ENCODE measurements at regions of chr9 and their contacts with region 1.

Region 1: DNA sequence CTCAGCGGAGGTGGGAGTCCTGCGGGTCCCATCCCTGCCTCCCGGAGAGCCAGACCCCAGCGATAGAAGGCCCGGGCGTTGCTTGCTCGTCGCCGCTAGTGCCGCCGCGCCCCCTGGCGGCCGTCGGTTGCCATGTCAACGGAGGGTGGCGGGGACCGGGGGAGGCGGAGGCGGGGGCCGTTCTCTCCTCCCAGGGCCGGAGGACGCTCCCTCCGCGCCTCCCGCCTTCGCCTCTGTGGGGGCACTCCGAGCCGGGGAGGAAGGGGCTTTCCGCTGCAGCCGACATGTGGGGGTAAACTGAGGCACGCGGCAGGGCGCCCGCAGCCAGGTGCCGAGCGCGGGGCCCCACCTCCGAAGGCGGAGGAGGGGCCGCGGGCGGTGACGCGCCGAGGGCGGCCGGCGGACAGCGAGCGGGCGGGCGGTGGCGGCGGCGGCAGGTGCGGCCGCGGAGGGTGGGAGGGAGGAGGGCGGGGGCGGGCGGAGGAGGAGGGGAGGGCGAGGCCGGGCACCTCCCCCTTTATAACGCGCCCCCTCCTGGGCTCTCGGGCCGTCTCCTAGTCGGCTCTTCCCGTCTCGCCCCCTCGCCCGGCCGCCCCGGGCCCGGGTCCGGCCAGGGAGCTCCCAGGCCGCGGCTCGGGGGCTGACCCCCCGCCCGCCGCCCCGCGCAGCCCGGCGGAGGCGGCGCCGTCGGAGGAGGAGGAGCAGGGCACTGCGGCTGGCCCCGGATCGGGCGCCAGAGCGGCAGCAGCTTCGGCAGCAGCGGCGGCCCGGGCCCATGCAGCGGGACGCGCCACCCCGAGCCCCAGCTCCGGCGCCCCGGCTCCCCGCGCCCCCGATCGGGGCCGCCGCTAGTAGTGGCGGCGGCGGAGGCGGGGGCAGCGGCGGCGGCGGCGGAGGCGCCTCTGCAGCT is 556 bp upstream of the CDK9 start:
- DNase-seq: peak; percentile 89 to 93 (median 90)
- H3K4me3 ChIP-seq: peak overlapping the region in 1 of 2 donors; percentile 61
- H3K4me3 Mint-ChIP-seq: peak overlapping the region; percentile 80 to 93 (median 86)
- H3K27ac ChIP-seq: peak overlapping the region; percentile 86
- H3K27ac Mint-ChIP-seq: peak overlapping the region; percentile 93 to 99 (median 97)
- H3K4me1 ChIP-seq: peaks cover 68% of the 10 kb centered on the region
- H3K4me1 Mint-ChIP-seq: peaks cover 34 to 74% (median 49%) of the 10 kb centered on the region in 4 donors
- H3K27me3 ChIP-seq: no peaks in the 10 kb centered on the region
- H3K27me3 Mint-ChIP-seq: no peaks in the 10 kb centered on the region

Region 2: DNA sequence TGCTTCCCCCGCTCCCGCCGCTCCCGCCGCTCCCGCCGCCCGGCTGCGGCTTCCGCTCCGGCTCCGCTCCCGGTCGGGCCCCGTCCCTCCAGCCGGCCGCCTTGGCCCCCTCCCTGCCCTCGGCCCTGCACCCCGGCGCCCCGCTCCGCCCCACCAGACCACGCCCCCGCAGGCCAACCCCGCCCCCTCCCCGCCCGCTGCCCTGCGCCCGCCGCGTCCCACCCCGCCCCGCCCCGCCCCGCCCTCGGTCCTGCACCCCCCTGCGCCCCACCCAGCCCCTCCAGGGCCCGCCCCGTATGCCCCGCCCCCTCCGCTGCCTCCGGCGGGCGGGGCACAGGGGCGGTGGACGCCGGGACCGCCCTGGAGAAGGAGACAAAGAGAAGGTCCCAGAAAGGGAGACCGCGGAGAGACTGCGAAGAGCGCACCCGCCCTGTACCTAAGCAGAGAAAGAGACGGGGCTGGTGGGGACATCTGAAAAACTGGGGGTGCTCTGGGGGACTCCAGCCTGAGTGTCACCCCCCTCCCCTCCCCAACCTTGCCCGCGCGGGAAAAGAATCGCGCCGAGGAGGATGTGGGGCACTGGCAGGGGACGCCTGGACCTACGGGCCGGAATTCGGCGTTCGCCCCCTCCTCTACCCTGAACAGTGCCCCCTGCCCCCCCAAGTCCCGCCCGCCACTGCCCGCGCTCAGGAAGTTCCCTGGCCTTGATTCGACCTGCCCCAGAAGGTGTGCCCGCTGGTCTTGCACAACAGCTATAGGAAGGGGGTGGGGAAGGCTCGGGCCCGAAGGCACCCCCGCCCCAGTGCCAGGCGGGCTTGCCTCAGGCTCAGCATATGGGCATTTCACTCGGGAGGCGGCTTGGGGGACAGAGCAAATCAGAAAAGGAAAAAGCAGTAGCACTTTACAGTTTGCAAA is 216.1 kb before region 1 on chr9:
- CTCF ChIA-PET with region 1: no interaction called
- POLR2A ChIA-PET with region 1: interaction called, 4 read pairs
- intact Hi-C with region 1: loop called (anchors 5 kb)
- DNase-seq: peak; percentile 72 to 78 (median 75)
- H3K4me3 ChIP-seq: peak overlapping the region; percentile 29 to 62
- H3K4me3 Mint-ChIP-seq: peak overlapping the region; percentile 79 to 94 (median 89)
- H3K27ac ChIP-seq: peak overlapping the region; percentile 56
- H3K27ac Mint-ChIP-seq: peak overlapping the region; percentile 82 to 97 (median 94)
- H3K4me1 ChIP-seq: peaks cover 36% of the 10 kb centered on the region
- H3K4me1 Mint-ChIP-seq: peaks cover 17 to 27% (median 21%) of the 10 kb centered on the region in 4 donors
- H3K27me3 ChIP-seq: no peaks in the 10 kb centered on the region
- H3K27me3 Mint-ChIP-seq: no peaks in the 10 kb centered on the region

Region 3: GRCh38 chr9:127686461-127687393 is 98.6 kb before region 1 on chr9:
- CTCF ChIA-PET with region 1: no interaction called
- POLR2A ChIA-PET with region 1: no interaction called
- intact Hi-C with region 1: no loop called
- DNase-seq: no peak
- H3K4me3 ChIP-seq: no peak overlapping the region
- H3K4me3 Mint-ChIP-seq: no peak overlapping the region
- H3K27ac ChIP-seq: no peak overlapping the region
- H3K27ac Mint-ChIP-seq: no peak overlapping the region
- H3K4me1 ChIP-seq: no peaks in the 10 kb centered on the region
- H3K4me1 Mint-ChIP-seq: no peaks in the 10 kb centered on the region
- H3K27me3 ChIP-seq: no peaks in the 10 kb centered on the region
- H3K27me3 Mint-ChIP-seq: no peaks in the 10 kb centered on the region

Region 4: DNA sequence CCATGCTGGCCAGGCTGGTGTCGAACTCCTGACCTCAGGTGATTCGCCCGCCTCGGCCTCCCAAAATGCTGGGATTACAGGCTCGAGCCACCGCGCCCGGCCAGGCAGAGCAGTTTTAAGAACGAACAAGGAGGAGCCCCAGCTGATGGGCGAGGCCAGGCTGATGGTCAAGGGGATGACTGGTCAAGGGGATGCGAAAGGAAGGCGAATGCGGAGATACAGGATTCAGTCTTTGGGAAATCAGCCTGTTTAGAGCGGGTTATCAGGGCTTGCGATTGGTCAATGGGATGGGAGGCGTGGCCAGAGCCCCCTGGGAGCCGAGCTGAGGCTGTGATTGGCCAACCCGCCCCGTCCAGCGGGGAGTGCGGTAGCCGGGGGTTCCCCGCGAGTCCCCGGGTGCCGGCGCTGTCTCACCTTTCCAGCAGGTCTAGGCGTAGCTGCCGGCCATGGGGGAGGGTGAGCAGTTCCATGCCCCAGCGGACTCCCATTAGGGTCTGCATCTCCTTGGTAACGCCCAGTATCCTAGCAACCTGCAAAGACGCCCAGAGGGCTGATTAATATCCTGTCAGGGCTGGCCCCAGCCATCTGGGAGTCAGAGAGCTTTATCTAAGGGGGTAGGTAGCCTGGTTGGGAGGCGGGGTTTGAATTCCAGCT is 42.7 kb before region 1 on chr9:
- CTCF ChIA-PET with region 1: interaction called, 14 read pairs
- POLR2A ChIA-PET with region 1: interaction called, 14 read pairs
- intact Hi-C with region 1: no loop called
- DNase-seq: no peak
- H3K4me3 ChIP-seq: no peak overlapping the region
- H3K4me3 Mint-ChIP-seq: no peak overlapping the region
- H3K27ac ChIP-seq: no peak overlapping the region
- H3K27ac Mint-ChIP-seq: peak overlapping the region in 2 of 7 donors; percentile 29 to 42
- H3K4me1 ChIP-seq: no peaks in the 10 kb centered on the region
- H3K4me1 Mint-ChIP-seq: peaks cover 0 to 7% (median 4%) of the 10 kb centered on the region in 4 donors
- H3K27me3 ChIP-seq: no peaks in the 10 kb centered on the region
- H3K27me3 Mint-ChIP-seq: no peaks in the 10 kb centered on the region

Region 5: DNA sequence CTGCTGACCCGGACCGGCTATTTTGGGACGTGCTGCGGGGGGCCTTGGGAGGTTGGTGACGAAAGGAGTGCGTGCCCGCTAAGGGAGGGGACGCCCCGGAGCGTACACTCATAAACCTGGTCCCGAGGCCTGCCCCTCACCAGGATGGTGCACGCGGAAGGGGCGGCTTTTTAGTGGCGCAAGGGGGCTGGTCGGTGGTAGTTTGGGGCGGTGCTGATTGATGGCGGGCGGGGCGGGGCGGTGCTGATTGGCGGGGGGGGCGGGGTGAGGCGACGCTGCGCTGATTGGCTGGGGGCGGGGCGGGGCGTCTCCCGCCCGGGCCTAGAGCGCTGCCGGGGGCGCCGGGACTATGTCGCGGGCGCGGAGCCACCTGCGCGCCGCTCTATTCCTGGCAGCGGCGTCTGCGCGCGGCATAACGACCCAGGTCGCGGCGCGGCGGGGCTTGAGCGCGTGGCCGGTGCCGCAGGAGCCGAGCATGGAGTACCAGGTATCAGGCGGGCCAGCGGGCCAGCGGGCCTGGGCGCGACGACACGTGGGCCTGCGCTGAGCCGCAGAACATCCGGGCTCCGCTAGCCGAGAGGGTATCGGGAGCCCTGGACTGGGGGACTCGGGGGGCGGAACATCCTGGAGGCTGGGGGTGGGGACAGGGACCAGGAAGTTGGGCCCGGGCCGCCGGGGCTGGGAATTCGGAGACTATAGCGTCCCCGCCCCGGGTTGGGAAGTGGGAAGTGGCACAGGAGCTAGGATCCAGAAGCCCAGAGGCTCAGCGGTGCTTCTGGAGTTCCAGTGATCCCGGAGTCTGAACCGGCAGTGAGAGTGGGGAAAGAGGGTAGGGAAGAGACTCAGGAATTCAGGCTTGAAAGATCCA is 17.5 kb after region 1 on chr9 and contains the start of gene FPGS:
- CTCF ChIA-PET with region 1: interaction called, 10 read pairs
- POLR2A ChIA-PET with region 1: interaction called, 54 read pairs
- intact Hi-C with region 1: loop called (anchors 1 kb)
- DNase-seq: peak; percentile 84 to 88 (median 87)
- H3K4me3 ChIP-seq: peak within 1 kb of the TSS; percentile 80 to 94
- H3K4me3 Mint-ChIP-seq: peak within 1 kb of the TSS; percentile 89 to 94 (median 92)
- H3K27ac ChIP-seq: peak within 1 kb of the TSS; percentile 72
- H3K27ac Mint-ChIP-seq: peak within 1 kb of the TSS; percentile 88 to 96 (median 93)
- H3K4me1 ChIP-seq: peaks cover 25% of the 10 kb centered on the region
- H3K4me1 Mint-ChIP-seq: peaks cover 4 to 38% (median 23%) of the 10 kb centered on the region in 4 donors
- H3K27me3 ChIP-seq: no peaks in the 10 kb centered on the region
- H3K27me3 Mint-ChIP-seq: no peaks in the 10 kb centered on the region
- total RNA-seq, gene FPGS: 100 to 101 TPM

Region 6: DNA sequence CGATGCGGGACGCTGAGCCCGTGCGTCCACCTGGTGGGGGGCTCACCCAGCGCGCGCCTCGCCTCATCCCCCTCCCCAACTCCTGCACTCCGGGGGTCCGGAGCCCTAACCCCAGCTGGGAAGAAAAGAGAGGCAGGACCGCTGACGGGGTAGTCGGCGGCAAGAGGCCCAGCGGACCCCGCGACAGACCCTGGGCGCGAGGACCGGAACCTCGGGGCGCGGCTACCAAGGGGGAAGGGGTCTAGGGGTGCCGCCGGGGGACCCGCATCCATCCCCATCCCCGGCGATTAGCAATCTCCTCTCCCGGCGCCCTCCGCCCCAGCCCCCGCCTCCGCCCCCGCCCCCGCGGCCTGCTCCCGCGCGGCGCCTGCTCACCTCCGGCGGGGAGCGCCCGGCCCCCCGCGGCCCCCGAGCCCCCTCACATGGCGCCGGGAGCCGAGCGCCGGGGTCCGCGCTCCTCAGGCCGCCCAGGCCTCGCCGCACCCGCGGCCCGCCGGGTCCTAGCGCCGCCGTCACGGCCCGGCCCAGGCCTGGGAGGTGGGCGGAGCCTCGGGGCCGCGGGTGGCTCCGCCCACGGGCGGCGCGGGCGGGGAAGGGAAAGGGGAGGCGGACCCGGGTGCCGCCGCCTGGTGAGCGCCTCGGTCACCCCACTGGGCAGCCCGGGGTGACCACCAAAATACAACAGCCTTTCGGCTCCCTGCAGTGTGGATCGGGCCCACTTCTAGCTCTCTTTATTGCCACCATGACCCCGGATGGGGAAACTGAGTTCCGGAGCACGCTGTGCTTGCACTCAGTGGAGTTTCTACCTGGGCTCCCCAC is 114.1 kb after region 1 on chr9 and contains the start of gene ST6GALNAC6:
- CTCF ChIA-PET with region 1: no interaction called
- POLR2A ChIA-PET with region 1: interaction called, 34 read pairs
- intact Hi-C with region 1: loop called (anchors 2 kb)
- DNase-seq: peak; percentile 61 to 74 (median 63)
- H3K4me3 ChIP-seq: peak within 1 kb of the TSS; percentile 68 to 79
- H3K4me3 Mint-ChIP-seq: peak within 1 kb of the TSS; percentile 87 to 92 (median 90)
- H3K27ac ChIP-seq: peak within 1 kb of the TSS; percentile 60
- H3K27ac Mint-ChIP-seq: peak within 1 kb of the TSS; percentile 47 to 91 (median 88)
- H3K4me1 ChIP-seq: peaks cover 58% of the 10 kb centered on the region
- H3K4me1 Mint-ChIP-seq: peaks cover 12 to 59% (median 37%) of the 10 kb centered on the region in 4 donors
- H3K27me3 ChIP-seq: no peaks in the 10 kb centered on the region
- H3K27me3 Mint-ChIP-seq: no peaks in the 10 kb centered on the region
- total RNA-seq, gene ST6GALNAC6: 125 to 127 TPM

Region 7: DNA sequence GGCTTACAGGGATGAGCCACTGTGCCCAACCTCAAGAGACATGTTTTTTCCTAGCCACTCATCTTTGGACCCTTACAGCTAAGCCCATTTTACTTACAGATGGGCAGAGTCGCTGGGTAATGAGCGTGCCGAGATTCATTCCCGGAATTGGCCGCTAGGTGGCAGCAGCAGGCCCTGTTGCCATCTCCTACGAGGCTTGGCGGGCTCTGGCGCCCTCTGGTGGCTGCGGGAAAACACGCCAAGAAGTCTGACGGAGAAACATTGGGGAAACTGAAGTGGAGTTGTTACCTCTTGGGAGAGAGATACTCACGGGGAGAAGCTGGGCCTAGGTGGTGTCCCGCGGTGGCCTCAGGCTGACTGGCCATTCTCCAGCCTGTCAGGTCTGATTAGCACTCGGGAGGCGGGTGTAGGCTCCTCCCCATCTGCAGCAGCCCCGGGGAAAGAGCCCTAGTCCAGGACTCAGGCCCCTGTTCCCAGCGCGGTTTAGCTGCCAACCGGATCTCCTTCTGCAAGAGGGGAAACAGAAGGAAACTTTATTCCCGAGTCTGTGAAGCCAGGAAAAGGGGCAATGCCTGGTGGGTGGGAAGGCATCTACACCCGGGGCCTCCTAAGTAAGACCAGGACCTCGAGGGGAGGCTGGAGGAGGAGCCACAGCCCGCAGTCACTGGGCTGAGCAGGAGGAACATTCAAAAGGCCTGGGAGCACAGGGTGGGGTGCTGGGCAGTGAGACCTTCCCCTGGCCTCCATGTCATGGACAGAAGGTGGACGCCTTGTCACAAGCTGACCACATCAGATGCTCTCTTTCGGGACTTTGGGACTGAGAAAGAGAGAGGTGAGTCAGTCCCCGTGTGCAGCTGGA is 332.6 kb after region 1 on chr9:
- CTCF ChIA-PET with region 1: no interaction called
- POLR2A ChIA-PET with region 1: no interaction called
- intact Hi-C with region 1: loop called (anchors 5 kb)
- DNase-seq: peak; percentile 88 to 93 (median 91)
- H3K4me3 ChIP-seq: no peak overlapping the region
- H3K4me3 Mint-ChIP-seq: peak overlapping the region in 2 of 8 donors; percentile 48 to 50
- H3K27ac ChIP-seq: no peak overlapping the region
- H3K27ac Mint-ChIP-seq: peak overlapping the region in 6 of 7 donors; percentile 9 to 91 (median 61)
- H3K4me1 ChIP-seq: peaks cover 6% of the 10 kb centered on the region
- H3K4me1 Mint-ChIP-seq: peaks cover 3 to 7% (median 5%) of the 10 kb centered on the region in 4 donors
- H3K27me3 ChIP-seq: no peaks in the 10 kb centered on the region
- H3K27me3 Mint-ChIP-seq: no peaks in the 10 kb centered on the region

Measured in CD4-positive, alpha-beta memory T cell (primary cell).